ENCODE measurements at regions of chr12 and their contacts with region 1.

Region 1: DNA sequence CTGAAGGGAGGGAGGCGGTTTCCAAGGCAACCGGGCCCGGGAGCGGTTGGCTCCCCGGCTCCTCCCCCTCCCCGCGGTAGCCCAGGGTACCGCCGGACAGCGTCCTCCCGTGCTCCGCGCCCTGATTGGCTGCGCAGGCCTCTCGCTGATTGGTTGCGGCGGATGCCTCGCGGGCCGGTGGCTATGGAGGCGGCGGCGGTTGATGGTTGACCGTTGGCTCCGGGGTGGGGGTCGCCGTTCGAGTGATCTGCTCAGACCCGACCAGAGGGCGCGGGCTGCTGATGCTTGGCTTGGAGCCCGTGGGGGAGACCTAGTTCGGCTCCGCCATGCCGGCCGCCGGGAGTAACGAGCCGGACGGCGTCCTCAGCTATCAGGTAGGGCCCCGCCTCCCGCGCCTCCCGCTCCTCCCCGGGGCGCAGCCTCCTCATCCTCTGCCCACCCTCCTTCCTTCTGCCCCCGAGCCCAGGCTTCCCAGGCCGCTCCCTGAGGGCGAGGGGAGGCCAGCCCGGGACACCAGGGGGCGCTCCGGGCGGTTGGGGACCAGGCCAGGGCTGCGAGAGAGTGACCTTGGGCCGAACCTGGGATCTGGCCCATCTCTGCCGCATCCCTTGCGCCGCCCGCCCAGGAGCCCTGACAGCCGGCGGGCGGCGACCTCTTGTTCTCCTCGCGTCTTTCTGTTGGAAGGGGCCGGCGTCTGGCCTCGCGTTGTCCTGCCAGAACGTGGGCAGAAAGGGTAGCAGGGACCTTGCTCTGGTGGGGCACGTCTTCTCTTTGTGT is at the start of gene SLC4A8:
- DNase-seq: peak; percentile 75
- ATAC-seq: peak; percentile 92
- H3K4me3 Mint-ChIP-seq: peak within 1 kb of the TSS; percentile 83
- H3K27ac Mint-ChIP-seq: peak within 1 kb of the TSS; percentile 25
- H3K4me1 Mint-ChIP-seq: peaks cover 16% of the 10 kb centered on the region
- H3K27me3 Mint-ChIP-seq: no peaks in the 10 kb centered on the region
- CTCF ChIP-seq: no peak
- total RNA-seq, gene SLC4A8: 5.2 and 5.8 TPM in 2 replicates

Region 2: DNA sequence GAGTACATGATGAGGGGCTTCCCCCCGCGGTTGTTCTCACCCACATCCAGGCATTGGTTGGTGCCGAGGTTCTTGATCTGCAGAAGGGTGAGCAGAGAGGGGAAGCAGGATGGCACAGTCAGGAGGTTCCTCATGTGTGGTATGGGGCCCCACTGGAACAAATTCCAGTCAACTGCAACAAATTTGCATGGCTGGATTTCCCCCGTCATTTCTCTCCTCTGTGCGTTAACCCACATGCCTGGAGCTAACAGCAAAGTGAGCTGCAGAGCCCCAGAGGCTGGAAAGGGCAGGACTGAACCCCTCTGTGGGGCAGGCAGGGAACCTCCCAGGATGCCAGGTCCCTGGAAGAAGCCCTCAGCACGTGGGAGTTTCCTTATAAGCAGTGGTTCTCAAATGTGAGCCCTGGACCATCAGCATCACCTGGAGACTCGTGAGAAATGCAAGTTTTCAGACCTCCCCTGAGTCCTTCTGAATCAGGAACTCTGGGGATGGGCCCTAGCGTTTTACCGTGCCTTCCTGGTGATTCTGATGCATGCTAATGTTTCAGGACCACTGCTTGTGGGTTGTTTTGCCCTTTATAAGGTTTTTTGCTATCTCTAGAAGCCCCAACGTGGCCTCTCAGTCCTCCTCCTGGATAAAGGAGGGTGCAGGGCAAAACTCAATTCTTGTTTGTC is 67.3 kb before region 1 on chr12:
- CTCF ChIA-PET with region 1: interaction called, 4 read pairs
- POLR2A ChIA-PET with region 1: no interaction called
- intact Hi-C with region 1: loop called (anchors 2 kb)
- DNase-seq: peak; percentile 58
- ATAC-seq: peak; percentile 90
- H3K4me3 Mint-ChIP-seq: peak overlapping the region; percentile 65
- H3K27ac Mint-ChIP-seq: peak overlapping the region; percentile 42
- H3K4me1 Mint-ChIP-seq: peaks cover 38% of the 10 kb centered on the region
- H3K27me3 Mint-ChIP-seq: no peaks in the 10 kb centered on the region
- CTCF ChIP-seq: no peak

Region 3: DNA sequence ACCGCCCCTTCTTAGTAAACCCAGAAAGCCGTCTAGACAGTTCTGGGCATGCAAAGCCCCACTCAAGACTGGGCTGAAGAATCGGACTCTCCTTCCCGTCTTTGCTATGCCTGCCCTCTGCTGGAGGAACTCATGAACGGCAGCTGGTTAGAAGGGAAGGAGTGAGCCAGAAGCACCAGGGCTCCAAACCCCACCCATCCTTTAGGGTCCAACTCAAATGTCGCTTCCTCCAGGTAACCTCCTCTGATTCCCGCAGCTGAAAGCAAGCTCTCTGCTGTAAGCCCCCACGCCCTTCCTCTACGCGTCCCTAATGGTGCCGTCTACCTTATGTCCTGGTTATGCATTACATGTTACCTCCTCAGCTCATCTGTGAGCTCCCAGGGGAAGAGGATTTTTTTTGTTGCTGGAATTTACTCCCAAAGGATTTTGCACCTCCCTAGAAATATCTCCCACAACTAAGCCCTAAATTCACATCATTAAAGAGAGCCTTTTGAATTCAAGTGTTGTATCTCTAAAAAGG is 107.2 kb after region 1 on chr12:
- CTCF ChIA-PET with region 1: interaction called, 52 read pairs
- POLR2A ChIA-PET with region 1: interaction called, 3 read pairs
- intact Hi-C with region 1: loop called (anchors 1 kb)
- DNase-seq: peak; percentile 56
- ATAC-seq: peak; percentile 97
- H3K4me3 Mint-ChIP-seq: no peak overlapping the region
- H3K27ac Mint-ChIP-seq: no peak overlapping the region
- H3K4me1 Mint-ChIP-seq: peaks cover 11% of the 10 kb centered on the region
- H3K27me3 Mint-ChIP-seq: peaks cover 28% of the 10 kb centered on the region
- CTCF ChIP-seq: peak; percentile 51

Region 4: GRCh38 chr12:51678086-51678724 is 253.4 kb after region 1 on chr12:
- CTCF ChIA-PET with region 1: interaction called, 3 read pairs
- POLR2A ChIA-PET with region 1: no interaction called
- intact Hi-C with region 1: loop called (anchors 1 kb)
- DNase-seq: no peak
- ATAC-seq: peak; percentile 60
- H3K4me3 Mint-ChIP-seq: no peak overlapping the region
- H3K27ac Mint-ChIP-seq: no peak overlapping the region
- H3K4me1 Mint-ChIP-seq: no peaks in the 10 kb centered on the region
- H3K27me3 Mint-ChIP-seq: peaks cover 14% of the 10 kb centered on the region
- CTCF ChIP-seq: no peak

Region 5: DNA sequence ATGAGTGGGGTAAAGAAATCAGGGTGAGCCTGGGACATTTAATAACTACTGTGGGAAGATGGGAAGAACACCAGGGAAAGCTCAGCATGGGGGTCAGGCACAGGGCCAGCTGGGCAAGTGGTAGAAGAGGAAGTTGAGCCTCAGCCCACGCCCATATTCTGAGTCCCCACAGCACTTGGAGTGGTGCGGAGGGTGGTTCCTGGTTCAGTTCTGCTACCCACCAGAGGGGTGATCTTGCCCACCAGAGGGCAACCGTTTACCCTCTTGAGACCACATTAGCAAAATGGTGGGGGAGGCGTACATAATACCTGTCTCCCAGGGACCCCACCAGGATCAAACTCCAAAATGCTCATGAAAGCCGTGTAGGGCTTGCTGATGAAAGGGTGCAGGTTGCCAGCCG is 446.3 kb after region 1 on chr12:
- CTCF ChIA-PET with region 1: interaction called, 6 read pairs
- POLR2A ChIA-PET with region 1: no interaction called
- intact Hi-C with region 1: loop called (anchors 1 kb)
- DNase-seq: no peak
- ATAC-seq: no peak
- H3K4me3 Mint-ChIP-seq: no peak overlapping the region
- H3K27ac Mint-ChIP-seq: no peak overlapping the region
- H3K4me1 Mint-ChIP-seq: peaks cover 10% of the 10 kb centered on the region
- H3K27me3 Mint-ChIP-seq: peaks cover 46% of the 10 kb centered on the region
- CTCF ChIP-seq: no peak

Region 6: DNA sequence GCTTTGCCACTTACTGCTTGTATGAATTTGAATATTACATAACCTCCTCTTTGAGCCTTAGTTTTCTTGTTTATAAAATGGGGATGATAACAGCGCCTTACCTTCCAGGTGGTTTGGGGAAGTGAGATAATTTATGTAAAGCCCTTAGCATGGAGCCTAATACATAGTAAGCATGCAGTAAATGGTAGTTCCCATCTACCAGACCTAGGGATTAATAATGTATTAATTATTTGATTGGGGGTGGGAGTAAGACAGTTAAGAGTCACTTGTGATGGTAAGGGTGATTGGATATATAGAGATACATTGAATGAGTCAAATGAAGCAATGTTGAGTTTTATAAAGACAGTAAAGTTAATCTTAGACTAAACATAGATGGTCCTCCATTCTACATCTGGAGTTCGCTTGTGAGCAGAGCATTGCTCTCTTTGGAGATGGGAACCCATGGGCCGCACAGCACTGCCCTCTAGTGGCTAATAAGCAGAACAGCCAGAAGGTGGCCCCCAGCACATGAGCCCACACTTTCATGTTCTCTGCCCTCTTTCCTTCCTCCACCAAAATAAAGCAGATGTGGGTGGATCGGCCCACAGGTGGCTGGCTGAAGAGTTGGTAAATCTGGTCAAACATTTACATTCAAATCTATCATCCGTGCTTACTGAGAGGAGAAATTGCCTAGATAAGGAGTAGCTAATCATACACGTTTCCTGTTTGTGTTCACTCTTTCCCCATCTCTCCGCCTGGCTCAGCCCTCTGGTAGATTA is 555.4 kb after region 1 on chr12:
- CTCF ChIA-PET with region 1: interaction called, 3 read pairs
- POLR2A ChIA-PET with region 1: no interaction called
- intact Hi-C with region 1: loop called (anchors 1 kb)
- DNase-seq: peak; percentile 41
- ATAC-seq: peak; percentile 98
- H3K4me3 Mint-ChIP-seq: no peak overlapping the region
- H3K27ac Mint-ChIP-seq: no peak overlapping the region
- H3K4me1 Mint-ChIP-seq: peaks cover 11% of the 10 kb centered on the region
- H3K27me3 Mint-ChIP-seq: no peaks in the 10 kb centered on the region
- CTCF ChIP-seq: peak; percentile 76

Region 7: DNA sequence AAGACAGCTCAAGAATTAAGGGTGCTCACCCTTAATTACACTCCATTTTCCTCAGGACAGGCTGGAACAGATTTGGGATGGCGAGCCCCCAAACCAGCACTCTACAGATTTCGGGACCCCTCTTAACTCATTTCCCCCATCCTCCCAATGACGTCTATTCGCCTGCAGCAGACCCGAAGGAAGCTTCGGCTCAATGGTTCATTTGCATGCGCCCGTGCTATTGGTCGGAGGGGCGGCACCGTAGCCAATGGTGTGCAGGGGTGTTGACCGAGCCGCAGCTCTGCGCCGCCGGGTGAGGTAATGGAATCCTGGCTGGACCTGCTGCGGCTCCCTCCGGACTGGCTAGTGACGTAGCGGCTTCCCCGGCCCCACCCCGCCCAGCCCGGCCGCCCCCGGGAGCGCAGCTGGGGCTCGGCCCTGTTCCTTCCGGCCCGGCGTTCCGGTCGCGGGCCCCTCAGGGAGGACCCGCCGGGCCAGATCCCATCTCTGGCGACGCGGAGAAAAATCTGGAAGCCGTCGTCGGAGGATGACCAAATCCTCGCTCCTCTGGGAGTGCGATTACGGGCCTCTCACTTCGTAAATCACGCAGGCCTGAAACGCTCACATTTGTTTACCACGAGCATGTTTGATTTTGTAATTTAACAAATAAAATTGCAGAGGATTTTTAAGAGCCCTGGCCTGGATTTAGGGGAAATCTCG is 608.1 kb after region 1 on chr12:
- CTCF ChIA-PET with region 1: no interaction called
- POLR2A ChIA-PET with region 1: no interaction called
- intact Hi-C with region 1: no loop called
- DNase-seq: peak; percentile 82
- ATAC-seq: peak; percentile 84
- H3K4me3 Mint-ChIP-seq: peak overlapping the region; percentile 77
- H3K27ac Mint-ChIP-seq: peak overlapping the region; percentile 88
- H3K4me1 Mint-ChIP-seq: peaks cover 44% of the 10 kb centered on the region
- H3K27me3 Mint-ChIP-seq: no peaks in the 10 kb centered on the region
- CTCF ChIP-seq: no peak

Measured in activated B cell treated with CpG ODN at 0.5 μM for 24 hours (primary cell).